Body of pancreas (tissue), 4 donors: ENCODE measurements at regions of chr1 and their contacts with region 1.

Region 1: DNA sequence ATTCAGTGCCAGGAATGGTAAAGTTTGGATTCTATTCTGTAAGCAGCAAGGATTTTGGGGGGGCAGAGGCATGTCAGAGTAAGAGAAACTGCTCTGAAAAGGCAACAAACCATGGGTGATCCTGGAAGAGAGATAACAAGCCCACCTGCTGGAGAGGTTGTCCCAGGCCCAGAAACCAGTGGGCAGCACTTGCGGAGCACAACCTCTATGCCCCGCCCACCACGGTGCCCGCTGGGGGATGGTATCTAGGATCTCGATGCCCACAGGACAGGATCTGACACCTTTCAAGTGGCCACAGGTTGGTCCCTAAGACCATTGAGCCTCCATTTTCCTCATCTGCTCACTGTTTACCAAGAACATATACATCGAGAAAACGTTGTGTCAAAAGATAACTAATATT is 20.3 kb upstream of the MUL1 start:
- DNase-seq: no peak
- ATAC-seq: no peak
- H3K4me3 ChIP-seq: no peak overlapping the region
- H3K27ac ChIP-seq: no peak overlapping the region
- H3K4me1 ChIP-seq: no peaks in the 10 kb centered on the region
- H3K27me3 ChIP-seq: no peaks in the 10 kb centered on the region
- CTCF ChIP-seq: no peak
- POLR2A ChIP-seq: no peak

Region 2: GRCh38 chr1:20472860-20473711 is 55.1 kb before region 1 on chr1:
- intact Hi-C with region 1: no loop called
- DNase-seq: peak in 3 of 4 donors; percentile 51 to 61 (median 56)
- ATAC-seq: no peak
- H3K4me3 ChIP-seq: no peak overlapping the region
- H3K27ac ChIP-seq: no peak overlapping the region
- H3K4me1 ChIP-seq: peaks cover 13% of the 10 kb centered on the region
- H3K27me3 ChIP-seq: no peaks in the 10 kb centered on the region
- CTCF ChIP-seq: no peak
- POLR2A ChIP-seq: no peak

Region 3: DNA sequence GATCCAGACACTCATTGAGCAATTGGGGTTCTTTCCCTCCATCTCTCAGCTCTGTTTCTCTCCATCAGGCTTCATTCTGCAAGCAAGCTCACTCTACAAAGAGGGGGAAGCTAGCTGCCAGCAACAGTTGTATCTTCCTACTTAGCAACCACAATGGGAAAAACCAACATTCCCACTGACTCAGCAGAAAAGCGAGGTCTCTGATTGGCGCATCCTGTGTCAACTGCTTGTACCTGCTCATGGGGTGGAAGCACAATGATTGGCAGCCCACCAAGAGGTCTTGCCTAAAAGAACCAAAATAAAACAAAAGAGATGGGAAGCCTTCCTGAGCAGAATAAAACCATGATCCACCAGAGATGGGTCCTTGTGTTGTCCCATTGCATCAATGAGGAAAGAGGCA is 56.7 kb after region 1 on chr1:
- intact Hi-C with region 1: no loop called
- DNase-seq: no peak
- ATAC-seq: no peak
- H3K4me3 ChIP-seq: no peak overlapping the region
- H3K27ac ChIP-seq: no peak overlapping the region
- H3K4me1 ChIP-seq: no peaks in the 10 kb centered on the region
- H3K27me3 ChIP-seq: peaks cover 0 to 14% of the 10 kb centered on the region in 2 donors
- CTCF ChIP-seq: no peak
- POLR2A ChIP-seq: no peak

Region 4: GRCh38 chr1:20634594-20635084 is 106.4 kb after region 1 on chr1:
- intact Hi-C with region 1: loop called (anchors 5 kb)
- DNase-seq: peak; percentile 64 to 80 (median 76)
- ATAC-seq: peak; percentile 31
- H3K4me3 ChIP-seq: peak overlapping the region; percentile 76 to 93
- H3K27ac ChIP-seq: peak overlapping the region in 3 of 4 donors; percentile 72 to 96 (median 90)
- H3K4me1 ChIP-seq: peaks cover 18% of the 10 kb centered on the region
- H3K27me3 ChIP-seq: no peaks in the 10 kb centered on the region
- CTCF ChIP-seq: no peak
- POLR2A ChIP-seq: no peak